Activated CD4-positive, alpha-beta T cell treated with anti-CD3 and anti-CD28 coated beads, Interleukin-2, amount 10 ng/mL, durations not matched to agents 24 days and 14 days (primary cell): ENCODE measurements at regions of chr2 and their contacts with region 1.

Region 1: GRCh38 chr2:208990716-208991115 is 433.1 kb upstream of the MAP2 start:
- DNase-seq: no peak
- H3K4me3 Mint-ChIP-seq: no peak overlapping the region
- H3K27ac Mint-ChIP-seq: no peak overlapping the region
- H3K4me1 Mint-ChIP-seq: no peaks in the 10 kb centered on the region
- H3K27me3 Mint-ChIP-seq: no peaks in the 10 kb centered on the region

Region 2: DNA sequence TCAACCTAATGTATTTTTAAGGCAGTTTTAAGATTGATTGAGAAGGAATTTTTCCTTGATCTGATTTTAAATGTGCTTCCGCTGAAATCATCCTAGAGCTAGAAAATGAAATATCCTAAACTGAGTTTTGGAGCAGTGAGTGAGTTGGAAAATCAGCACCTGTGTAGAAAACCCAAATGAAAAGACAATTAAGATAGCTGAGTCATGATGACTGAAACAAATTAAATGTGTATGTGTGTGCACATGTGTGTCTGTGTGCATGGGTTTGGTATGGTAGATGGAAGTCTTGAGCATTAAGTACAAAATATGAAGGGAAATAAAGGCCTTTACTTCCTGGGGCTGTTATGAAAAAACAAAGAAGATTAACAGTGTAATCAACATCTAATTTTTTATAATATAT is 38.5 kb after region 1 on chr2:
- intact Hi-C with region 1: loop called (anchors 5 kb)
- DNase-seq: no peak
- H3K4me3 Mint-ChIP-seq: no peak overlapping the region
- H3K27ac Mint-ChIP-seq: no peak overlapping the region
- H3K4me1 Mint-ChIP-seq: no peaks in the 10 kb centered on the region
- H3K27me3 Mint-ChIP-seq: no peaks in the 10 kb centered on the region

Region 3: GRCh38 chr2:209191139-209191538 is 200.4 kb after region 1 on chr2:
- intact Hi-C with region 1: no loop called
- DNase-seq: no peak
- H3K4me3 Mint-ChIP-seq: no peak overlapping the region
- H3K27ac Mint-ChIP-seq: no peak overlapping the region
- H3K4me1 Mint-ChIP-seq: no peaks in the 10 kb centered on the region
- H3K27me3 Mint-ChIP-seq: no peaks in the 10 kb centered on the region